SK-N-SH (cell line): ENCODE measurements at regions of chr12 and their contacts with region 1.

Region 1: GRCh38 chr12:108457006-108457733 is 57.9 kb upstream of the FICD start:
- DNase-seq: peak; percentile 68
- H3K4me3 ChIP-seq: no peak overlapping the region
- H3K27ac ChIP-seq: peak overlapping the region in 1 of 2 experiments; percentile 90; a peak in 2 of 4 replicates
- H3K4me1 ChIP-seq: peaks cover 0 to 14% of the 10 kb centered on the region in 2 experiments; a peak in 2 of 4 replicates
- H3K27me3 ChIP-seq: no peaks in the 10 kb centered on the region
- CTCF ChIP-seq: peak; percentile 66
- EP300 ChIP-seq: no peak
- RAD21 ChIP-seq: peak; percentile 93

Region 2: GRCh38 chr12:107731366-107731765 is 725.8 kb before region 1 on chr12:
- CTCF ChIA-PET with region 1: no interaction called
- POLR2A ChIA-PET with region 1: no interaction called
- DNase-seq: no peak
- H3K4me3 ChIP-seq: no peak overlapping the region
- H3K27ac ChIP-seq: no peak overlapping the region
- H3K4me1 ChIP-seq: no peaks in the 10 kb centered on the region; a peak in 1 of 4 replicates
- H3K27me3 ChIP-seq: no peaks in the 10 kb centered on the region
- CTCF ChIP-seq: no peak
- EP300 ChIP-seq: no peak
- RAD21 ChIP-seq: no peak

Region 3: DNA sequence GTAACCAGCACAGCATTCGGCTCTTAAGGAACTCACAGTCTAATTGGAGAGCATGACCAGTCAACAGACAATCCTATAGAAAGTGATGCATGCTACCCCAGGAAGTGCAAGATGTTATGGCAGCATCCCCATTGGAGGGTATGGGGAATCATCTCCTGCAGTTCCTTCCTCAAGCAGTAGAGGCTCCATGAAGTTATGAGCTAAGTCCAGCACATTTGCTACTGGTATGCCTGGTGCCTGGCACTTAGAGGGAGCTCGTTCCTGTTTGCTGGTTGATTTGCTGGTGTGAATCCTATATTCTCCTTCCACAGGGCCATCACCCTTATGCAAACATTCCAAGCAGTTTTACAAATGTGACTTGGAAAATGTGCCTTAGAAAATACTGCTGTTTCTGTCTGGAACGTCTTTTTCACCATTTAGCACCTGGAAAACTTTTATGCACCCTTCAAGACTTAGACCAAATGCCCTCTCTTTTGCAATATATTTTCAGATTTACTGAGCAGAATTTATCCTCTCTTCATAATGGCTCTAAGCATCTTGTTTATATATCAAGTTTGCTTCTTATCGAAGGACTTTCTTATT is 464.2 kb before region 1 on chr12:
- CTCF ChIA-PET with region 1: interaction called, 41 read pairs
- POLR2A ChIA-PET with region 1: no interaction called
- DNase-seq: peak; percentile 46
- H3K4me3 ChIP-seq: no peak overlapping the region
- H3K27ac ChIP-seq: no peak overlapping the region
- H3K4me1 ChIP-seq: no peaks in the 10 kb centered on the region; a peak in 1 of 4 replicates
- H3K27me3 ChIP-seq: no peaks in the 10 kb centered on the region
- CTCF ChIP-seq: peak; percentile 24
- EP300 ChIP-seq: no peak
- RAD21 ChIP-seq: peak; percentile 68

Region 4: GRCh38 chr12:108234158-108234557 is 223.0 kb before region 1 on chr12:
- CTCF ChIA-PET with region 1: interaction called, 30 read pairs
- POLR2A ChIA-PET with region 1: no interaction called
- DNase-seq: peak; percentile 58
- H3K4me3 ChIP-seq: no peak overlapping the region
- H3K27ac ChIP-seq: no peak overlapping the region
- H3K4me1 ChIP-seq: peaks cover 0 to 22% of the 10 kb centered on the region in 2 experiments; a peak in 2 of 4 replicates
- H3K27me3 ChIP-seq: no peaks in the 10 kb centered on the region
- CTCF ChIP-seq: no peak
- EP300 ChIP-seq: no peak
- RAD21 ChIP-seq: peak; percentile 79

Region 5: DNA sequence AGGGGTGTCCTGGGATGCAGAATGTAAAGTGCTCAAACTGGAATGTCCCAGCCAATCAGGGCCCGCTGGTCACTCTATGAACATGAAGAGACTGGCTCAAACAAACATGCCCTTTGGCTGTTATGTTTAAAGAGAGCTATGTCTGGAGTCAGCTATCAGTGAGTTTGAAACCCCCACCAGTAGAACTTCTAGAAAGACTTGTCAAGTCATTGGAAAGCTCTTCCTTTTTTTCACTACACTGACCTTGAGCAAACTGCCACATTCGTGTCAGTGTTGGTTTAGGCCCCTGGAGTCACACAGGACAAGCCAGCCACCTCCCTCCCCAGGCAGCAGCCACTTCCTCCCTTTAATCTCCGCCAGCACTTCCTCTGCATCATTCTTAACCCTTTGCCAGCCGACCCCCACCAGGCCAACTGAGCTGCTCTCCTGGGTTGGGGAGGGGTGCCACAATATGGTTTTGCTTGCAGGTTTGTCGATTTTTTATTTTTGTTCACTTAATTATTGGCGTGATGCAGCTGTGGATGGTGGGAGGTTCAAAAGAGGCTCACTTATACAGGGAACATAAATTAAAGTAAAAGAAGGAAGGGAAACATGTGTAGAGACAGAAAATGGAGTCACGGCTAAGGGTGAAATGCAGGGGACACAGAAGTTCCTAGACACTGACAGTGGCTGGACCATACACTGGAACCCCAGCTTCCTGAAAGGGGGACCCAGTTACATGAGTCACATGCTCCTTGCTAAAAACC is 143.4 kb before region 1 on chr12:
- CTCF ChIA-PET with region 1: interaction called, 23 read pairs
- POLR2A ChIA-PET with region 1: no interaction called
- DNase-seq: peak; percentile 41
- H3K4me3 ChIP-seq: no peak overlapping the region
- H3K27ac ChIP-seq: peak overlapping the region in 1 of 2 experiments; percentile 97; a peak in 2 of 4 replicates
- H3K4me1 ChIP-seq: peaks cover 0 to 57% of the 10 kb centered on the region in 2 experiments; a peak in 2 of 4 replicates
- H3K27me3 ChIP-seq: no peaks in the 10 kb centered on the region
- CTCF ChIP-seq: no peak
- EP300 ChIP-seq: no peak
- RAD21 ChIP-seq: no peak

Region 6: GRCh38 chr12:108381787-108382436 is 75.3 kb before region 1 on chr12:
- CTCF ChIA-PET with region 1: interaction called, 18 read pairs
- POLR2A ChIA-PET with region 1: no interaction called
- DNase-seq: no peak
- H3K4me3 ChIP-seq: no peak overlapping the region
- H3K27ac ChIP-seq: peak overlapping the region in 1 of 2 experiments; percentile 92; a peak in 2 of 4 replicates
- H3K4me1 ChIP-seq: peaks cover 0 to 30% of the 10 kb centered on the region in 2 experiments; a peak in 2 of 4 replicates
- H3K27me3 ChIP-seq: no peaks in the 10 kb centered on the region
- CTCF ChIP-seq: no peak
- EP300 ChIP-seq: peak in 1 of 2 experiments; percentile 59; a peak in 1 of 4 replicates
- RAD21 ChIP-seq: no peak

Region 7: GRCh38 chr12:108468201-108468968 is 11.2 kb after region 1 on chr12:
- CTCF ChIA-PET with region 1: interaction called, 29 read pairs
- POLR2A ChIA-PET with region 1: no interaction called
- DNase-seq: no peak
- H3K4me3 ChIP-seq: no peak overlapping the region
- H3K27ac ChIP-seq: no peak overlapping the region
- H3K4me1 ChIP-seq: peaks cover 0 to 2% of the 10 kb centered on the region in 2 experiments; a peak in 1 of 4 replicates
- H3K27me3 ChIP-seq: no peaks in the 10 kb centered on the region
- CTCF ChIP-seq: no peak
- EP300 ChIP-seq: no peak
- RAD21 ChIP-seq: no peak

Region 8: DNA sequence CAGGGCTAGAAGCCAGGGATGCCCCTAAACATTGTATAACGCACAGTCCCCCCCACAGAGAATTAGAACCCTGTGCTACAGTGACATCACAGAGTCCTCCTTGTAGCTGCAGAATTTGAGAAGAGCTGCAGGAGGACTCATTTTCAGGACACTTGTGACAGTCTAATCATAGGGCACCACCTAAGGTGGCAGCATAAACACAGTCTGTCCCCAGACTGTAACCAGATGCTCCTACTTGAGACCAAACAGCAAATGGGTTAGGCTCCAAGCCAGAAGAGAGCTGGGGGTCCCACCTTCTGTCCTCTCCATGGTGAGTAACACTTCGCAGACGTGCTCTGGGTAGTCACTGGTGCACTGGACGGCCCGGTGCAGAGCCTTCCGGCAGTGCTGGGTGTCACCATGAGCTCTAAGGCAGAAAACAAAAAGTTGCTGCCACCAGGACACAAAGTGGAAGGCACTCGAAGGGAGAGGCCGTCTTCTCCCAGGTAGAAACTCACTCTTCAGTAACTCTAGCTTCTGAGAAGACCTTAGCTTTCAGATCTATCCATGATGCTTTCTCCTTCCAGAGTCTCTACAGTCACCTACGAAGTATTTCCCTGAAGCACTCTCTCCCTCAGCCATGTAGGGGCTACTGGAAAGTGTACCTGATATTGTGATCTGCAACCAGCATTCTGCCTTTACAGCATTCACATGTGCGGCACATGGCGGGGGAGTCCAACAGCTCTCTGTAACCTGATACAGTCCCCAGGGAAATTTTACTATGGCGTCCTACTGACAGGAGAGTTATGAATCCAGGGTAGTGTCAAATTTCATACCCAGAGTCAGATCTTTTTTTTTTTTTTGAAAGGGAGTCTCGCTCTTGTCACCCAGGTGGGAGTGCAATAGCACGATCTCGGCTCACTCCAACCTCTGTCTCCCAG is 75.0 kb after region 1 on chr12:
- CTCF ChIA-PET with region 1: no interaction called
- POLR2A ChIA-PET with region 1: no interaction called
- DNase-seq: no peak
- H3K4me3 ChIP-seq: no peak overlapping the region
- H3K27ac ChIP-seq: no peak overlapping the region
- H3K4me1 ChIP-seq: peaks cover 0 to 4% of the 10 kb centered on the region in 2 experiments; a peak in 1 of 4 replicates
- H3K27me3 ChIP-seq: no peaks in the 10 kb centered on the region
- CTCF ChIP-seq: no peak
- EP300 ChIP-seq: no peak
- RAD21 ChIP-seq: no peak